Posterior vena cava (tissue), 2 donors: ENCODE measurements at regions of chr2 and their contacts with region 1.

Region 1: DNA sequence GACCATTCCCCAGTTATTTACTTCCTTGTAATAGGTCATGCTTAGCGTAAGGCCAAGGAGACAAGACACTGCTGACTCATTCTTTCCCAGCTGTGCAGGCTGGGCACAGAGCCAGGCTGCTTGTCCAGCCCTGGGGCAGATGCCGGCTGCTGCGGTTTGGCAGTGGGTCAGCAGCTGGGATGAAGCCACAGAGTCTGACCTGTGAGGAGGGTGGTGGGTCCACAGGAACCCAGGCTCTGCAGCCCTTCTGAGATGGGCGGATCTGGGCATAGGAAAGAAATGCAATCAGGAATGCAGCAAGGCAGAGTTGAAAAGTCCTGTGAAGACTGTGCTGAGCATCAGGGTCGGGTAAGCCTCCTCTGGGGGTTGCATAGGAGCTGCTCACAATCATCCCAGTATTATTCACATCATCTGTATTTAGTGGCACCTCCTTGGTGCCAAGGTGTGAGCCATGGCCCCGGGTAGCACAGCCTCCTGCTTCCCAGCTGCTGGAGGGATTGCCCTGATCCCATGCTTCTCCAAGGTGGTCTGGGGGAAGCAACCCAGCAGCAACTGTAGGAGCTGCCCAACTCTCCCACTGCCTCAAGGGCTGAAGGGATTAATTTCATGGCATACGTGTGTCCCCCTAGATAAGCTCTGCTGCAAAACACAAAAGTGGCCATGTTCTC is 139.0 kb downstream of the DDX1 start:
- DNase-seq: peak; percentile 98

Region 2: GRCh38 chr2:13821255-13821880 is 1909.3 kb before region 1 on chr2:
- intact Hi-C with region 1: loop called in 1 of 2 experiments (anchors 5 kb)
- DNase-seq: no peak

Region 3: GRCh38 chr2:15546297-15547098 is 184.2 kb before region 1 on chr2:
- intact Hi-C with region 1: no loop called
- DNase-seq: no peak